ENCODE measurements at regions of chr9 and their contacts with region 1.

Region 1: GRCh38 chr9:108272349-108272899 is 583.4 kb downstream of the ACTL7B start:
- DNase-seq: peak; percentile 73
- H3K4me3 Mint-ChIP-seq: peak overlapping the region; percentile 52
- H3K27ac Mint-ChIP-seq: peak overlapping the region; percentile 93
- H3K4me1 Mint-ChIP-seq: peaks cover 30% of the 10 kb centered on the region
- H3K27me3 Mint-ChIP-seq: no peaks in the 10 kb centered on the region
- CTCF ChIP-seq: peak; percentile 79

Region 2: DNA sequence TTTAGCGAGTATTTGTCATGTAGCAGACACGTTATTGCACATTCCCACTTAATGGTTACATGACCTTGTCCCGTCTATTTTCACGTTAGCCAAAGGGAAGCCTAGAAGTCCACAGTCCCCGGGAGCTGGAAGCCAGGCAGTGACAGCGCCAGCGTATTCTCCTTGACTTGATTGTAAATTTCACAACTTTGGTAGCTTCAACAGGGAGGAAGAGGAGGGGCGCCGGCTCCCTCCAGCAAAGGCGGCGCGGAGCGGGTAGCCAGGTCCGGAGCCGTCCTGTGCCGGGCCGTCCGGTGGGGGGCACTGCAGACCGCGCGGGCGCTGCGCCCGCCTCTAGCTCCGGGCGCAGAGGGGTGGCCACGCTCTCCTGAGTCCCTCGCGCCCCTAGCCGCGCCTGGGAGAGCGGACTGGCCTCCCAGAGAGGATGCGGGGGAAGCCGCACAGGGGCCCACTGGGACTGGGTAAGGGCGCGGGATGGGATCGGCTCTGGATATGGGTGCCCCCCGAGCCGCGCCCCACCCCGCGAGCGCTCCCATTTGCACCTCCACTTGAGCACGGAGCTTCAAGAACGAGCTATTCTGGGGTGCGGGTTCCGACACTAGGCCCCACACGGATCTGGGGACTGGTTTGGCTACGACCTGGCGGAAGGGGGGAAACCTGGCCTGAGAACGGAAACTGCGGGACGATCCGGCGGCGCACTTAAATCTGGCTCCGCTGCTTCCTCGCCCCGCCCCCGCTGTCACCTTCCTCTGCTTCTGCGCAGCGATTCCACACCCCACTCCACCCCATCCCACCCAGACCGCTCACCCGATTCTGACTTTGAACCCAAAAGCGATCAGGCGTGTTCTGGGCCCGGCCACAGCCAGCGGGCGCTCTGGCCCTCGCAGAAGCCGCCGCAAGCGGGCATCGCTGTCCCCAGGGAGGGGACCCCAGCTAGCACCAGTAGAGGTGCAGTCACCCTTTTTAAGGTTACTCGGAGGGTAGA is 806.7 kb before region 1 on chr9:
- CTCF ChIA-PET with region 1: no interaction called
- POLR2A ChIA-PET with region 1: no interaction called
- intact Hi-C with region 1: loop called (anchors 1 kb)
- DNase-seq: peak; percentile 61
- H3K4me3 Mint-ChIP-seq: peak overlapping the region; percentile 69
- H3K27ac Mint-ChIP-seq: no peak overlapping the region
- H3K4me1 Mint-ChIP-seq: no peaks in the 10 kb centered on the region
- H3K27me3 Mint-ChIP-seq: no peaks in the 10 kb centered on the region
- CTCF ChIP-seq: peak; percentile 95

Region 3: GRCh38 chr9:107484117-107484723 is 788.2 kb before region 1 on chr9:
- CTCF ChIA-PET with region 1: interaction called, 11 read pairs
- POLR2A ChIA-PET with region 1: interaction called, 13 read pairs
- intact Hi-C with region 1: loop called (anchors 1 kb)
- DNase-seq: peak; percentile 81
- H3K4me3 Mint-ChIP-seq: no peak overlapping the region
- H3K27ac Mint-ChIP-seq: no peak overlapping the region
- H3K4me1 Mint-ChIP-seq: peaks cover 31% of the 10 kb centered on the region
- H3K27me3 Mint-ChIP-seq: no peaks in the 10 kb centered on the region
- CTCF ChIP-seq: peak; percentile 55

Region 4: DNA sequence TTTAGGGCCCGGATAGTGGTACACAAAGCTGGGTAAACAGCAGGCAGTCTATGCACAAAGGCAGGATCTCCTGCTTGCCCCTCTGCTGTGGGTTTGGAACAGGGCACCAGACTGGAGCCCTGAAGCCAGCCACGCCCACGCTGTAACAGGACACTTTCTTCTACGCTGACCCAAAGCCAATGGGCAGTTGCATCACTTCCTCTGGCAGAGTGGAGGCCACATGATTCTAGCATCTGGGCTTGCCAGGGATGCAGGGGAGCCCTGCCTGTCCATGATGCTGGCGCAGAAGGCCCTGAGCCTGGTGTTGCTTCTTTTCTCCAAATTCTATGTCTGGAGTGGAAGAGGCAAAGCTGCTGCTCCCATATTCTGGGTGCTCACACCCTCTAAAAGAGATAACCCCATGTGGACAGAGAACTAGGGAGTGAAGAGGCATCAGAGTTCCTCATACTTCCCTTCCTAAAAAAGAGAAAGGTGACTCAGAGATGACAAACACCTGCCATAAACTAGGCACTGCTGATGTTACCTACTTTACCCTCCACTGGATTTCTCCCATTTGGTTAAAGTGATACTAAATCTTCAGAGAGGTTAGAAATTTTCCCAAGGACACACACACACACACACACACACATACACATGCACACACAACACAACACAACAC is 522.5 kb before region 1 on chr9:
- CTCF ChIA-PET with region 1: interaction called, 10 read pairs
- POLR2A ChIA-PET with region 1: no interaction called
- intact Hi-C with region 1: loop called (anchors 1 kb)
- DNase-seq: peak; percentile 98
- H3K4me3 Mint-ChIP-seq: no peak overlapping the region
- H3K27ac Mint-ChIP-seq: peak overlapping the region; percentile 43
- H3K4me1 Mint-ChIP-seq: peaks cover 38% of the 10 kb centered on the region
- H3K27me3 Mint-ChIP-seq: no peaks in the 10 kb centered on the region
- CTCF ChIP-seq: no peak

Region 5: GRCh38 chr9:107971241-107971640 is 301.2 kb before region 1 on chr9:
- CTCF ChIA-PET with region 1: no interaction called
- POLR2A ChIA-PET with region 1: no interaction called
- intact Hi-C with region 1: no loop called
- DNase-seq: no peak
- H3K4me3 Mint-ChIP-seq: no peak overlapping the region
- H3K27ac Mint-ChIP-seq: no peak overlapping the region
- H3K4me1 Mint-ChIP-seq: peaks cover 6% of the 10 kb centered on the region
- H3K27me3 Mint-ChIP-seq: no peaks in the 10 kb centered on the region
- CTCF ChIP-seq: no peak

Region 6: GRCh38 chr9:108259917-108260675 is 12.3 kb before region 1 on chr9:
- CTCF ChIA-PET with region 1: interaction called, 5 read pairs
- POLR2A ChIA-PET with region 1: interaction called, 24 read pairs
- intact Hi-C with region 1: no loop called
- DNase-seq: peak; percentile 67
- H3K4me3 Mint-ChIP-seq: peak overlapping the region; percentile 17
- H3K27ac Mint-ChIP-seq: peak overlapping the region; percentile 93
- H3K4me1 Mint-ChIP-seq: peaks cover 20% of the 10 kb centered on the region
- H3K27me3 Mint-ChIP-seq: no peaks in the 10 kb centered on the region
- CTCF ChIP-seq: no peak

Region 7: GRCh38 chr9:108282872-108283271 is 10.4 kb after region 1 on chr9:
- CTCF ChIA-PET with region 1: interaction called, 16 read pairs
- POLR2A ChIA-PET with region 1: interaction called, 3 read pairs
- intact Hi-C with region 1: no loop called
- DNase-seq: peak; percentile 22
- H3K4me3 Mint-ChIP-seq: no peak overlapping the region
- H3K27ac Mint-ChIP-seq: no peak overlapping the region
- H3K4me1 Mint-ChIP-seq: no peaks in the 10 kb centered on the region
- H3K27me3 Mint-ChIP-seq: no peaks in the 10 kb centered on the region
- CTCF ChIP-seq: no peak

Region 8: GRCh38 chr9:108382310-108382709 is 109.9 kb after region 1 on chr9:
- CTCF ChIA-PET with region 1: no interaction called
- POLR2A ChIA-PET with region 1: no interaction called
- intact Hi-C with region 1: no loop called
- DNase-seq: no peak
- H3K4me3 Mint-ChIP-seq: no peak overlapping the region
- H3K27ac Mint-ChIP-seq: no peak overlapping the region
- H3K4me1 Mint-ChIP-seq: peaks cover 16% of the 10 kb centered on the region
- H3K27me3 Mint-ChIP-seq: no peaks in the 10 kb centered on the region
- CTCF ChIP-seq: no peak